Posterior cingulate gyrus (tissue), 11 donors: ENCODE measurements at regions of chr7 and their contacts with region 1.

Region 1: GRCh38 chr7:101287032-101287431 is 34.6 kb downstream of the IFT22 start:
- DNase-seq: peak in 3 of 10 donors; percentile 19 to 34 (median 33)

Region 2: GRCh38 chr7:100837099-100837836 is 449.8 kb before region 1 on chr7:
- intact Hi-C with region 1: no loop called
- DNase-seq: peak; percentile 89 to 99 (median 94)

Region 3: DNA sequence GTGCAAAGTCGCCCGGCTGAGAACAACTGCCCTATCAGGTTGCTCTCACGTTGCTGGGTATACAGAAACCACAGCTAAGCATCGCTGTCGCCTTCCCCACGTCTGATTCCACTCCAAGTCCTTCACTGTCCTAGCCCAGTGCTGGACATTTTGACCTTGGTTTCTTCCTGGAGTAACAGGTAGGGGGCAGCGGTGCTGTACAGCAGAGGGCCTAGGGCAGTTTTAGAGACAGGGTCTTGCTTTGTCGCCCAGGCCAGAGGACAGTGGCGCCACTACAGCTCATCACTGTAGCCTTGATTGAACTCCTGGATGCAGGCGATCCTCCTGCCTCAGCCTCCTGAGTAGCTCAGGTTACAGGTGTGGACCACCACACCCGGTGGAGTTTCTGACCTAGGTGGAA is 52.0 kb before region 1 on chr7:
- intact Hi-C with region 1: loop called (anchors 10 kb)
- DNase-seq: no peak